ENCODE measurements at regions of chr15 and their contacts with region 1.

Region 1: DNA sequence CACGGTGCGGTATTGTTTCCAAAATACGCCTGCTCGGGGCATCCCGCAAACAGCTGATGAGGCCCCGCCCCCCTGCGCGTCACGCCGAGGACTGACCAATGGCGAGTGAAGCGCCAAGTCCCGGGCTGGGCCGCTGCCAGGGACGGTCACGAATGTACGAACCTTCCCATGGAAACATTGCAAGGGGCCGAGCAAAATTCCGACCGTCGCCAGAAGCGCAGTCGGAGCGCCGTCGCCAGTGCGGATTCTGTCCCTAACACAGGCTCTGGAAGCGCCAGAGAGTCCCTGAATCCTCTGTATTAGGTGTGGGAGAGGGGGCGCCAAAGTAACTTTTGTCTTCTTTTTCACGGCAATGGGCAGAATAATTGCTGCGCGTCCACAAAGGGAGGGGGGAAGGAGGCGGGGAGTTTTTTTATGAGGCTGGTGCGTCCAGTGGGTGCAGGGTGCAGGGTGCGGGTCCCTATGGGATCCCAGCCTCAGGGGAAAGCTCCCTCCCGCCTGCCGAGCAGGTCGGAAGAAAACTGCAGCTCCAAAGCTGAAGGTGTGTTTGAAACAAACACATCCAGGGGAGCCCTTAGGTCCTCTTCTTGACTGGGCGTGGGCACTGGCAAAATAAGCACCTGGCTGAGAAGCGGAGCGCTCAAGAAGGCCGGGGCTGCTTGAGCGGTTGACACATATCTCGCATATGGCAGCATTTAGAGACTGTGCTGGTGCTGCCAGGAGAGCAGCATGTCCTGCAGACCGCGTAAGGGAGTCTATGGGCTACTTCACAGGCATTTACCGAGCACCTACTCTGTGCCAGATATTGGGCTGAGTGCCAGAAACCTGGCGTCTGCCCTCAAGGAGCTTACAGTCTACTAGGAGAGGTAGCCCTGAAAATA is at the start of gene BMF:
- DNase-seq: peak; percentile 97
- ATAC-seq: peak; percentile 73
- H3K4me3 ChIP-seq: peak within 1 kb of the TSS; percentile 85 to 93 (median 86)
- H3K27ac ChIP-seq: peak within 1 kb of the TSS; percentile 79
- H3K4me1 ChIP-seq: peaks cover 78% of the 10 kb centered on the region
- H3K27me3 ChIP-seq: no peaks in the 10 kb centered on the region
- CTCF ChIP-seq: peak; percentile 80
- EP300 ChIP-seq: peak; percentile 10 to 45; a peak in 1 of 4 replicates
- POLR2A ChIP-seq: 0 out of 4 replicates have a peak, but pooled peaks of 1 of the 2 experiments have one; percentile 28
- RAD21 ChIP-seq: peak; percentile 54
- total RNA-seq, gene BMF: 5.4 and 8.7 TPM in 2 replicates

Region 2: DNA sequence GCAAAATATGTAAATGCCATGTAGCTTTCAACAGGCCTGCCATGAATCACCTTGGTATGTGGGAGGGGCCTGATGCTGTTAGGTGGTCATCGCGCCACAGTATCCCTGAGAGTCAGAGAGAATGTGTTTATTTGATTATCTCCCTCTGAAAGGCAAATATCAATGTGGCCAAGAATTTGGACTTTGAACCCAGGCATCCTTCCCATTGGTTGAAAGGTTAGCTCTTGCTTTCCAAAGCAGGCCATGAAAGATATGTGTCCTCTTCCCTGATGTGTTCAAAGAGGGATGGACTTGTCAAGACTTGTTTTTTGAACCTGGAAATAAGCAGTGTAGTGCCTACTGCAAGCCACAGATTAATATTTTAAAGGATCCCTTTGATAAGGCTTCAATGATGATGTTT is 106.8 kb before region 1 on chr15:
- CTCF ChIA-PET with region 1: no interaction called
- POLR2A ChIA-PET with region 1: interaction called, 18 read pairs
- in situ Hi-C with region 1: no loop called
- intact Hi-C with region 1: no loop called
- DNase-seq: peak; percentile 99
- ATAC-seq: peak; percentile 99
- H3K4me3 ChIP-seq: peak overlapping the region; percentile 52 to 63 (median 57); a peak in 5 of 6 replicates
- H3K27ac ChIP-seq: peak overlapping the region; percentile 89
- H3K4me1 ChIP-seq: peaks cover 57% of the 10 kb centered on the region
- H3K27me3 ChIP-seq: no peaks in the 10 kb centered on the region
- CTCF ChIP-seq: 0 out of 2 replicates have a peak, but pooled peaks have one; percentile 3
- EP300 ChIP-seq: peak in 1 of 2 experiments; percentile 83; a peak in 2 of 4 replicates
- POLR2A ChIP-seq: peak; percentile 47 to 65; a peak in 3 of 4 replicates
- RAD21 ChIP-seq: peak; percentile 24; the same call in 1 of the 2 replicates

Region 3: GRCh38 chr15:40044717-40045571 is 64.2 kb before region 1 on chr15:
- CTCF ChIA-PET with region 1: interaction called, 7 read pairs
- POLR2A ChIA-PET with region 1: interaction called, 60 read pairs
- in situ Hi-C with region 1: loop called (anchors 5 kb)
- intact Hi-C with region 1: loop called (anchors 2 kb)
- DNase-seq: peak; percentile 56
- ATAC-seq: peak; percentile 88
- H3K4me3 ChIP-seq: peak overlapping the region; percentile 14 to 60 (median 50); a peak in 5 of 6 replicates
- H3K27ac ChIP-seq: peak overlapping the region; percentile 15
- H3K4me1 ChIP-seq: peaks cover 54% of the 10 kb centered on the region
- H3K27me3 ChIP-seq: no peaks in the 10 kb centered on the region
- CTCF ChIP-seq: peak; percentile 99
- EP300 ChIP-seq: no peak
- POLR2A ChIP-seq: no peak
- RAD21 ChIP-seq: peak; percentile 98

Region 4: DNA sequence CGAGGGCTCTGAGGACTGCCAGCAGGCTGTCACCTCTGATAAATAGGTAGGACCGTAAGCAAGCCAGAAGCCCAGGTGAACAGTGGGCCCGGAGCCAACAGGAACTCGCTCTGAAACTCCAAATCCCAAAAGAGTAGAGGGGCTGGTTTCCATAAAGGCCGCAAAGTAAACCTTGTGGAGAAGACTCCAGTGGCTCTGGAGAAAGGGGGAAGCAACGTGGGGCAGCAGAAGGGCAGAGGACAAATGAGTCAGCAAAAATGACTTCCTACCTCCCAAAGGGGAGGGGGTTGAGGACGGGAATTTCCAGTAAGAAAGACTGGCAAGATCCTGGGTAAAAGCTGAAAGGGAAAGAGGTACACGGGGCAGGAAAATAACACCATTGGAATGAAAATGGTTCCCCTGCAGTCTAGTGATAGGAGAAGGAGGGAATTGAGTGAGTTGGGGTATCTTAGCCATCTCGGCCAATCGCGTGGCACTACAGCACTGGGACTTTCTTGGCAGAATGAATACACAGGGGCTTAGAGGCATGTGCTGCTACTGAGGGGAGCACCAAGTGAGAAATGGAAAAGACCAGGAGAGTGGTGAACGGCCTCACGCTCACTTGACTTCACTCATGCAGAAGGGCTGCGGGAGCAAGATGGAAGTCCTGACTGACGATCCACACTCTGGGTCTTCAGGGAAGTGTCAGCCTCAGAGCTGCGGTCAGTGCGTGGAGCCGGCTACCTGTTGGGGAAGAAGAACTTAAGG is 33.6 kb before region 1 on chr15:
- CTCF ChIA-PET with region 1: no interaction called
- POLR2A ChIA-PET with region 1: interaction called, 39 read pairs
- in situ Hi-C with region 1: no loop called
- intact Hi-C with region 1: no loop called
- DNase-seq: no peak
- ATAC-seq: no peak
- H3K4me3 ChIP-seq: no peak overlapping the region
- H3K27ac ChIP-seq: peak overlapping the region; percentile 17
- H3K4me1 ChIP-seq: peaks cover 46% of the 10 kb centered on the region
- H3K27me3 ChIP-seq: no peaks in the 10 kb centered on the region
- CTCF ChIP-seq: no peak
- EP300 ChIP-seq: no peak
- POLR2A ChIP-seq: no peak
- RAD21 ChIP-seq: no peak

Region 5: DNA sequence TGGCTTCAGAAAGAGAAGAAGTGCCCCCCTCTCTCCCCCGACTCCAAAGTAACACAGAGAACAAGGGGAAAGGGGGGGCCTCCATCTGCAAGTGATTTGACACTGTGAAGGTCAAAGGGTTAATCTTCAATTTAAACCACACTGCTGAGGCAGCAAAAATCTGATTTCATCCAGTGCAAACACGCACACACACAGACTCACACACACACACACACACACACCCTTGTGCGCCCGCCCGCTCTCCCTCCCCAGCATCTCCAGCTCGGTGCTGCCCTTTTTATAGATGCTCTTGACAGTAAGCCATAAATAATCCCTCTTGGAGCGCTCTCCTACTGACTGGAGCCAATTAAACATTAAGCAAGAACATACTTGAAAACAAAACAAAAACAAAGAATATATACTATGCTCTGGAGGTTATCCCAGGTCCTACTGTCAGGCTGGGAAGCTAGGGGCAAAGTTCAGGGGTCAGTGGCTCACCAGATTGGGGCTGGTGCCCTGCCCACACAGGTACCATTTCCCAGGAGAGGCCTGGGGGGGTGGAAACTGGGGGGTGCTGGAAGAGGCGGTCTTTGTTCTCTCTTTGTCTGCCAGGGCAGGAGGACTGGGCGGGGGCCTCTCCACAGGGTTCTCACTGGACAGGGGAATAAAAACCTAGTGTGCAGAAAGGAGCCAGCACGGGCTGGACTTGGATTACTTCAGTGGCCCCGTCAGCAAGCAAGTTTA is 16.7 kb before region 1 on chr15:
- CTCF ChIA-PET with region 1: no interaction called
- POLR2A ChIA-PET with region 1: interaction called, 371 read pairs
- in situ Hi-C with region 1: no loop called
- intact Hi-C with region 1: loop called (anchors 2 kb)
- DNase-seq: peak; percentile 84
- ATAC-seq: peak; percentile 66
- H3K4me3 ChIP-seq: peak overlapping the region; percentile 23 to 61 (median 34); a peak in 4 of 6 replicates
- H3K27ac ChIP-seq: peak overlapping the region; percentile 86
- H3K4me1 ChIP-seq: peaks cover 99% of the 10 kb centered on the region
- H3K27me3 ChIP-seq: no peaks in the 10 kb centered on the region
- CTCF ChIP-seq: no peak
- EP300 ChIP-seq: peak; percentile 23 to 80; a peak in 2 of 4 replicates
- POLR2A ChIP-seq: peak in 1 of 2 experiments; percentile 46; a peak in 1 of 4 replicates
- RAD21 ChIP-seq: no peak

Region 6: GRCh38 chr15:40160689-40161688 is 51.9 kb after region 1 on chr15 and contains the start of gene BUB1B:
- CTCF ChIA-PET with region 1: no interaction called
- POLR2A ChIA-PET with region 1: interaction called, 25 read pairs
- in situ Hi-C with region 1: no loop called
- intact Hi-C with region 1: loop called (anchors 2 kb)
- DNase-seq: peak; percentile 95
- ATAC-seq: peak; percentile 91
- H3K4me3 ChIP-seq: peak within 1 kb of the TSS; percentile 77 to 98 (median 91)
- H3K27ac ChIP-seq: peak within 1 kb of the TSS; percentile 74
- H3K4me1 ChIP-seq: peaks cover 58% of the 10 kb centered on the region
- H3K27me3 ChIP-seq: no peaks in the 10 kb centered on the region; a peak in 2 of 5 replicates
- CTCF ChIP-seq: peak; percentile 15; the same call in 1 of the 2 replicates
- EP300 ChIP-seq: no peak
- POLR2A ChIP-seq: peak; percentile 62 to 69; a peak in 3 of 4 replicates
- RAD21 ChIP-seq: no peak; the same call in 1 of the 2 replicates
- total RNA-seq, gene BUB1B: 63.5 and 71.9 TPM in 2 replicates